Activated CD8-positive, alpha-beta T cell treated with anti-CD3 and anti-CD28 coated beads for 36 hours (primary cell): ENCODE measurements at regions of chr17 and their contacts with region 1.

Region 1: GRCh38 chr17:32253117-32253611 is 12.5 kb upstream of the RHBDL3 start:
- DNase-seq: peak; percentile 89
- ATAC-seq: peak; percentile 100
- H3K4me3 Mint-ChIP-seq: no peak overlapping the region
- H3K27ac Mint-ChIP-seq: no peak overlapping the region
- H3K4me1 Mint-ChIP-seq: no peaks in the 10 kb centered on the region
- H3K27me3 Mint-ChIP-seq: peaks cover 2% of the 10 kb centered on the region
- CTCF ChIP-seq: peak; percentile 98

Region 2: GRCh38 chr17:32264140-32264799 is 11.1 kb after region 1 on chr17:
- CTCF ChIA-PET with region 1: interaction called, 14 read pairs
- POLR2A ChIA-PET with region 1: interaction called, 3 read pairs
- intact Hi-C with region 1: no loop called
- DNase-seq: no peak
- ATAC-seq: no peak
- H3K4me3 Mint-ChIP-seq: peak overlapping the region; percentile 15
- H3K27ac Mint-ChIP-seq: no peak overlapping the region
- H3K4me1 Mint-ChIP-seq: peaks cover 12% of the 10 kb centered on the region
- H3K27me3 Mint-ChIP-seq: peaks cover 61% of the 10 kb centered on the region
- CTCF ChIP-seq: no peak